ENCODE measurements at regions of chr3 and their contacts with region 1.

Region 1: DNA sequence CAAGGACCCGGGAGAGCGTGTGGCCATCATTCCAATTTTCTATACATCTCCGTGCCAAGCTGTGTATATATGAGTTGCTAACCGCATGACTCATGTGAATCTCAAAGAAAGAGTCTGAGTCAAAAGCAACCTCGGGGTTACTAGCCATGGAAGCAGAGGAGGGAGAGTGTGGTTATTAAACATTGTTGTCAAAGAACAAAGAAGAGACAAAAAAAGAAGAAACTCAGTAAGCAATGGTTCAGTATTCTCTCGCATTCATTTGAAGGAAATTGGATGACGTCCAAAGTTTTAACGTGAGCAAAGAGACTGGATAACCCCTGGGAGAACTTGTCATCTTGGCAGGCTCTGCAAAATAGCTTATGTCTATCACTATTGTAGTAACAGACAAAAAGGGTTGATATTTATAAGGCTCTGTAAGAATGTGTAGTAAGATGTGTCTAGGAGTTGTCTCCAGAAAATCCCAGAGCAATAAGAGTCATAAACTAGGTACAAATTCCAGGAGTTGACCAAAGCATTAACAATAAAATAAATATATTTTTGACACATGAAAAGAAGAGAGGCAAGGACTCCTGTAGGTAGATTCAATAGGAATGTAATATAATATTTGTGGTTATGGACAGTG is 52.8 kb upstream of the GRM7 start:
- DNase-seq: no peak
- ATAC-seq: no peak
- H3K4me3 ChIP-seq: no peak overlapping the region
- H3K27ac ChIP-seq: no peak overlapping the region
- H3K4me1 ChIP-seq: no peaks in the 10 kb centered on the region
- H3K27me3 ChIP-seq: peaks cover 0 to 4% (median 0%) of the 10 kb centered on the region in 7 donors
- CTCF ChIP-seq: no peak

Region 2: GRCh38 chr3:5226783-5227182 is 1581.3 kb before region 1 on chr3:
- intact Hi-C with region 1: loop called in 1 of 10 experiments (anchors 10 kb)
- DNase-seq: no peak
- ATAC-seq: no peak
- H3K4me3 ChIP-seq: no peak overlapping the region
- H3K27ac ChIP-seq: no peak overlapping the region
- H3K4me1 ChIP-seq: peaks cover 0 to 9% (median 4%) of the 10 kb centered on the region in 9 donors
- H3K27me3 ChIP-seq: peaks cover 0 to 18% (median 0%) of the 10 kb centered on the region in 7 donors
- CTCF ChIP-seq: peak in 7 of 9 donors; percentile 35 to 63 (median 45)

Region 3: GRCh38 chr3:6560259-6560658 is 247.8 kb before region 1 on chr3:
- intact Hi-C with region 1: no loop called
- DNase-seq: no peak
- ATAC-seq: no peak
- H3K4me3 ChIP-seq: no peak overlapping the region
- H3K27ac ChIP-seq: no peak overlapping the region
- H3K4me1 ChIP-seq: no peaks in the 10 kb centered on the region
- H3K27me3 ChIP-seq: no peaks in the 10 kb centered on the region
- CTCF ChIP-seq: no peak

Measured in heart right ventricle (tissue), 16 donors.